BJ (cell line): ENCODE measurements at regions of chr22 and their contacts with region 1.

Region 1: GRCh38 chr22:42621505-42622002 is 6.9 kb upstream of the POLDIP3 start:
- DNase-seq: no peak
- H3K4me3 ChIP-seq: no peak overlapping the region
- H3K27me3 ChIP-seq: no peaks in the 10 kb centered on the region
- CTCF ChIP-seq: peak; percentile 89

Region 2: GRCh38 chr22:42635531-42635930 is 14.0 kb after region 1 on chr22:
- CTCF ChIA-PET with region 1: interaction called, 24 read pairs
- POLR2A ChIA-PET with region 1: no interaction called
- DNase-seq: peak; percentile 82
- H3K4me3 ChIP-seq: no peak overlapping the region
- H3K27me3 ChIP-seq: no peaks in the 10 kb centered on the region
- CTCF ChIP-seq: no peak

Region 3: DNA sequence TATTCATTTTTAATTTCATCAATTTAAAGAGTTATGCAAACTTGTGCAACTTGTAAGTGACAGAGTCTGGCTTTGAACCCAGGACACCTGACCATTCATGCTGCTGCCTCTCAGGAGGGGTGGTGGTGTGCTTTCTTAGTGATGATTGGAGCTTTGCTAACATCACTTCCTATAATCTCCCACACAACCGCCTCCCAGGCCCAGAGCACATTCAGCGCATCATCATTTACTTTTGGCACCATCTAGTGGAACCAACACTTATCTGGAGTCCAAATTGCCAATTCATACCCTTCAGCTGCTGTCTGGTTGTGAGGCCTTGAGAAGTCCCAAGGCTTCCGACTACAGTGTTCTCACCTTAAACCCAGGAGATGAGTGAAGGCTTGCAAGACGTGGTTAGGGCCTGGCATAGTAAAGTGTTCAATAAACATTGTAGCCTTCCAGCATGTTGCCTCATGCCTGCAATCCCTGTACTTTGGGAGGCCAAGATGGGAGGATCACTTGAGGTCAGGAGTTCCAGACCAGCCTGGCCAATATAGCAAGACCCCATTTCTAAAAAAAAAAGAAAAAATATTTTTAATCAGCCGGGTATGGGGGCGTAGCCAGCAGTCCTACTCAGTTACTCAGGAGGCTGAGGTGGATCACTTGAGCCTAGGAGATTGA is 468.7 kb after region 1 on chr22:
- CTCF ChIA-PET with region 1: interaction called, 10 read pairs
- POLR2A ChIA-PET with region 1: no interaction called
- DNase-seq: peak; percentile 58
- H3K4me3 ChIP-seq: no peak overlapping the region
- H3K27me3 ChIP-seq: no peaks in the 10 kb centered on the region
- CTCF ChIP-seq: peak; percentile 61